OCI-LY7 (cell line): ENCODE measurements at regions of chr15 and their contacts with region 1.

Region 1: DNA sequence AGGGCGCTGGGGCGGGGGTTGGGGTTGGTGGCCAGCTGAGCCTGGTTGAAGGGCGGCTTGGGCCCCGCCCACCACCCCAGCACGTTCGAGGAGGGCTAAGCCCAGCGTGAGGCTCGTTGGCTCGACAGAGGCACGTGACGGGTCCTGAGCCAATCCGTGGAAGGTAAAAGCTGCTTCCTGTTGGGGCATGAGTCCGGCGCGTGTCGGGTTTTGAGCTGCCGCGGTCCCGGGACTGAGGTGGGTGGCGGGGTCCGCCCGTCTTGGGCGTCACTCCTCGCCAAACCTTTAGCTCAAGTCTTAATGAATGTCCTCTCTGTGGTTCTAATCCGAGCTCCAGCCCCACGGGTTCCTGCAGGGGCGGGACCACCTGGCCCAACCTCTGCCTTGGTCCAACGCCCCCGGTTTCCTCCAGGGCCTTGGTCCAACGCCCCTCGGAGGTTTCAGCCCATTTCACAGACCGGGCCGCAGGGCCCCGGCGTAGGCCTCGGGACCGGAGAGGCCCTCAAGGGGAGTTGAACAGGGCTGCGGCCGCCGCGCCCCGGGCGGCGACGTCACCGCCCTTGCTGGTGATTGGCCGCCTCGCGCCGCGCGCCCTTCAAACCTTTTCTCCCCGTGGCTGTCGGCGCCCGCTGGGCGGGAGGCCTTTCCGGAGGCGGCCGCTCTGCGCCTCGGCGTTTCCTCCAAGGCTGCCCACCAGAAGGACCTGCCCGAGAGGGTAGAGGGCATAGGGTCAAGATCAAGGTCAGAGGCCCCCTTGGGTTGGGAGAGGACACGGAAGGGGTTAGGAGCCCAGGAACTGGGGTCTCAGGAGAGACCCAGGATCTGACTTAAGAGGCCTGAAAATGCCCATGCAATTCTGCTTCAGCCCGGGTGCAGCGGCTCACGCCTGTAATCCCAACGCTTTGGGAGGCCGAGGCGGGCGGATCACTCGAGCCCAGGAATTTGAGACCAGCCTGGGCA is at the start of gene RCCD1:
- DNase-seq: peak; percentile 98
- H3K4me3 ChIP-seq: peak within 1 kb of the TSS; percentile 71
- H3K27ac ChIP-seq: peak within 1 kb of the TSS; percentile 89
- H3K4me1 ChIP-seq: peaks cover 18% of the 10 kb centered on the region
- CTCF ChIP-seq: no peak
- total RNA-seq, gene RCCD1: 74.8 and 77.7 TPM in 2 replicates

Region 2: GRCh38 chr15:90994417-90995311 is 39.7 kb after region 1 on chr15 and contains the start of gene PRC1:
- CTCF ChIA-PET with region 1: no interaction called
- POLR2A ChIA-PET with region 1: interaction called, 6 read pairs
- intact Hi-C with region 1: loop called (anchors 2 kb)
- DNase-seq: peak; percentile 98
- H3K4me3 ChIP-seq: peak within 1 kb of the TSS; percentile 84
- H3K27ac ChIP-seq: peak within 1 kb of the TSS; percentile 68
- H3K4me1 ChIP-seq: peaks cover 30% of the 10 kb centered on the region
- CTCF ChIP-seq: no peak
- total RNA-seq, gene PRC1: 224 and 402 TPM in 2 replicates

Region 3: GRCh38 chr15:91032919-91033803 is 78.2 kb after region 1 on chr15:
- CTCF ChIA-PET with region 1: interaction called, 3 read pairs
- POLR2A ChIA-PET with region 1: no interaction called
- intact Hi-C with region 1: loop called (anchors 1 kb)
- DNase-seq: peak; percentile 55
- H3K4me3 ChIP-seq: no peak overlapping the region
- H3K27ac ChIP-seq: no peak overlapping the region
- H3K4me1 ChIP-seq: no peaks in the 10 kb centered on the region
- CTCF ChIP-seq: peak; percentile 73

Region 4: GRCh38 chr15:91049378-91050127 is 94.6 kb after region 1 on chr15:
- CTCF ChIA-PET with region 1: interaction called, 8 read pairs
- POLR2A ChIA-PET with region 1: interaction called, 3 read pairs
- intact Hi-C with region 1: loop called (anchors 1 kb)
- DNase-seq: peak; percentile 76
- H3K4me3 ChIP-seq: no peak overlapping the region
- H3K27ac ChIP-seq: no peak overlapping the region
- H3K4me1 ChIP-seq: peaks cover 12% of the 10 kb centered on the region
- CTCF ChIP-seq: peak; percentile 85

Region 5: DNA sequence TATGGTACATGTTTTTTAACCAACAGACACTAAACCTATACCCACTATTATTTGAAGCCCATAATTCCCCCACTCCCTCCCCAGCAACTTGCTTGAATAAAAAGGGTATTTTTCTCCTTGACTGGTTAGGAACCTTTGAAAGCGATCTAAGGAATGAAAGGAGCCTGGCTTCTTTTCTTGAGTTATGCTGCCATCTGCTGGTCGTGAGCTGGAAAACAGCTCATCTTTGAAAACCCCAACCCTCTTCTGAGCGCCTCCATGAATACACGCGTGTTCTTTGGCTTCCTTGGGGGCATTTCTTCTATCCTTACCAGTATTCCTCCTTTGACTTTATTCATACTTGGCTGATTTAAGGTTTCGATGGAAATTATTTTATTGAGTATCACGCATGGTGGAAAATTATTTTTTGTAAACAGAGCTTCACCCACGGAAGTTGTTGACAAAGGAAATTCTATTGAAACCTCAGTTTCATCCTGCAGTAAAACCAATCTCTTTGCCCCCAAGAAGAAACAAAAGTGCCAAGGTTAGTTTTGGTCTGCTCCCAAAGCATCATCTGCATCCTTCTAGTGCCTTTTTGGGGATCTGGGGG is 316.7 kb after region 1 on chr15:
- CTCF ChIA-PET with region 1: interaction called, 3 read pairs
- POLR2A ChIA-PET with region 1: no interaction called
- intact Hi-C with region 1: loop called (anchors 2 kb)
- DNase-seq: peak; percentile 73
- H3K4me3 ChIP-seq: no peak overlapping the region
- H3K27ac ChIP-seq: no peak overlapping the region
- H3K4me1 ChIP-seq: no peaks in the 10 kb centered on the region
- CTCF ChIP-seq: peak; percentile 96

Region 6: DNA sequence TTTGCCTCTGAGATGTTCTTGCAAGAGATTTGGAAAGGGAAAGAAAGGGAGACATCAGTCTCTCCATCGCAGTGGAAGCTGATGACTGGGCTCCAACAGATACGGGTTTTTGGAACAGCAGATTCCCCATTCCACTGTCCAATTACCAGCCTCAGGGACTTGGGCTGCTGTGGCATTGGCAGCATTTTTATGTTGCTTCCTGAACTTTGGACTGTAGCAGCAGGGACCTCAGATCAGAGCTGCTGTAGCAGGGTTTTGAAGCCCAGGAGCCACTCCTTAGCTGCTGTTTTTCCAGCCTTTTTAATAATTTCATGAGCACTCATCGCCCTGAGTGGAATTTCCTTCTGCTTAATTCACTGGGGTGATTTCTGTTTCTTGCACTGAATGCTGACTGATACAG is 762.8 kb after region 1 on chr15:
- CTCF ChIA-PET with region 1: no interaction called
- POLR2A ChIA-PET with region 1: no interaction called
- intact Hi-C with region 1: no loop called
- DNase-seq: no peak
- H3K4me3 ChIP-seq: no peak overlapping the region
- H3K27ac ChIP-seq: no peak overlapping the region
- H3K4me1 ChIP-seq: no peaks in the 10 kb centered on the region
- CTCF ChIP-seq: no peak